ENCODE measurements at regions of chr17 and their contacts with region 1.

Region 1: DNA sequence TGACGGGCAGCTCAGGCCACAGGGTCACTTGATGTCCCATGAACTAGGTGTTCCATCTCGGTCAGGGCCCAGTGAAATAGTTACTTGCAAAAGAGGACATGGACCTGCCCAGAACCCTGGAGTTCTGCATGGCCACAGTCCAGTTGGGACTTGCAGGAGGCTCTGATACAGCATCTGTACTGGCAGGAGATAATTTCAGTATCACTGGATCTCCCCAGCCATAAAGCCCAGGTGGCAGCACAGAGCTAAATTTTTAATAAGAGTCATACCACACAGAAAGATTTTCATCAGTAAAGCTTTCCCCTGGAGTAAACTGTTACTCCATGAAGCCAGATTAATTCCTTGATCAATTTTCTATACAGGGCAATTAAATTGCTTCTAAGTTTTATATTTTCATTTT is 18.0 kb upstream of the SLC16A5 start:
- DNase-seq: peak in 1 of 9 experiments; percentile 34
- ATAC-seq: no peak
- H3K4me3 ChIP-seq: no peak overlapping the region
- H3K4me3 Mint-ChIP-seq: no peak overlapping the region
- H3K27ac ChIP-seq: no peak overlapping the region
- H3K27ac Mint-ChIP-seq: no peak overlapping the region
- H3K4me1 ChIP-seq: peaks cover 9% of the 10 kb centered on the region
- H3K4me1 Mint-ChIP-seq: peaks cover 16% of the 10 kb centered on the region
- H3K27me3 ChIP-seq: no peaks in the 10 kb centered on the region
- H3K27me3 Mint-ChIP-seq: no peaks in the 10 kb centered on the region
- CTCF ChIP-seq: no peak

Region 2: DNA sequence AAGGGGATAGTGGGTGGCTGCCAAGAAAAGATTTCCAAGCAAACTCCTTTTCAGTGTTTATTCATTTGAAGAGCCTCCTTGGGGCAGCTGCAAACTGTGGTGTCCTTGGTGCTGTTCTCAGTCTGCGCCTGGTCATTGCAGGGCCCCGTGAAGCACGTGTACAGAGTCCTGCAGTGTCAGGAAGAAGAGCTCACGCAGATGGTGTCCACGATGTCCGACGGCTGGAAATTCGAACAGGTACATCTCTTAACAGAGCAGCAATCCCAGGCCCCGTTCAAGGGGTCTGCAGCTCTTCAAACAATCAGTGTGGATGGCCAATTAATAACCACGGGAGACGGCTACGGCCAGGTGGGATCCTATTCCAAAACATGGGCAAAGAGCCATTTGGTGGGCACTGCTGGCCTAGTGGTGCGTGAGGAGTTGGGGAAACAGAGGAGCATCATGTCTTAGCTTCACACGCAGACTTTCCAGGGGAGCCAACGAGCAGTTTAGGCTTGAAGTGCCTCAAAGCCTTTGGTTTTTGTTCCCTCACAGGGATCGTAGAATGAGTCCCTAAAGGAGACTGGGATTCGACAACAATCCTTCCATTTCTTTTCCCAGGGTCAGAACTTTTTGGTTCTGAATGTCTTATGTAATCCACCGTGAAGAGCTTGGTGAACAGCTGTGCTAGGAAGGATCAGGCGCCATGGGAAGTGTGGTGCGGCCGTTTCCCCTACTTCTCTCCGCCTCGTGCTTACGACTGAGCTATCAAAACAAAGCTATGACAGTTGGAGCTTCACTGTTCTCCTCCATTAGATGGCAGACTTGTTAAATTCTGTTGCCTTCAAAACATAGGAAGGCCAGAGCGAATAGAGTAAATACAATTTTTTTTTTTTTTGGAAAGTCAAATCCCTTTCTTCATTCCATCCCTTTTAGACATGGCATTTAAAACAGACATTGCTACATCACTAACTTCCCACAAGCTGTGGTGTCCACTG is 10.1 kb before region 1 on chr17:
- CTCF ChIA-PET with region 1: interaction called, 15 read pairs
- POLR2A ChIA-PET with region 1: no interaction called
- intact Hi-C with region 1: no loop called
- DNase-seq: peak in 2 of 9 experiments; percentile 26 to 47
- ATAC-seq: peak; percentile 64
- H3K4me3 ChIP-seq: no peak overlapping the region
- H3K4me3 Mint-ChIP-seq: no peak overlapping the region
- H3K27ac ChIP-seq: no peak overlapping the region
- H3K27ac Mint-ChIP-seq: peak overlapping the region; percentile 55
- H3K4me1 ChIP-seq: no peaks in the 10 kb centered on the region
- H3K4me1 Mint-ChIP-seq: peaks cover 14% of the 10 kb centered on the region
- H3K27me3 ChIP-seq: no peaks in the 10 kb centered on the region
- H3K27me3 Mint-ChIP-seq: no peaks in the 10 kb centered on the region
- CTCF ChIP-seq: peak; percentile 18

Region 3: GRCh38 chr17:75087558-75088453 is 18.0 kb after region 1 on chr17 and contains the start of gene SLC16A5:
- CTCF ChIA-PET with region 1: interaction called, 3 read pairs
- POLR2A ChIA-PET with region 1: interaction called, 10 read pairs
- intact Hi-C with region 1: no loop called
- DNase-seq: peak in 8 of 9 experiments; percentile 31 to 75 (median 50)
- ATAC-seq: peak; percentile 69
- H3K4me3 ChIP-seq: peak within 1 kb of the TSS; percentile 49 to 50
- H3K4me3 Mint-ChIP-seq: peak within 1 kb of the TSS; percentile 83
- H3K27ac ChIP-seq: peak within 1 kb of the TSS; percentile 26 to 27
- H3K27ac Mint-ChIP-seq: peak within 1 kb of the TSS; percentile 45
- H3K4me1 ChIP-seq: peaks cover 38% of the 10 kb centered on the region
- H3K4me1 Mint-ChIP-seq: peaks cover 40% of the 10 kb centered on the region
- H3K27me3 ChIP-seq: no peaks in the 10 kb centered on the region
- H3K27me3 Mint-ChIP-seq: no peaks in the 10 kb centered on the region
- CTCF ChIP-seq: no peak
- total RNA-seq, gene SLC16A5: 2.9 to 3.6 TPM